Left lung (tissue), 14 donors: ENCODE measurements at regions of chrX and their contacts with region 1.

Region 1: DNA sequence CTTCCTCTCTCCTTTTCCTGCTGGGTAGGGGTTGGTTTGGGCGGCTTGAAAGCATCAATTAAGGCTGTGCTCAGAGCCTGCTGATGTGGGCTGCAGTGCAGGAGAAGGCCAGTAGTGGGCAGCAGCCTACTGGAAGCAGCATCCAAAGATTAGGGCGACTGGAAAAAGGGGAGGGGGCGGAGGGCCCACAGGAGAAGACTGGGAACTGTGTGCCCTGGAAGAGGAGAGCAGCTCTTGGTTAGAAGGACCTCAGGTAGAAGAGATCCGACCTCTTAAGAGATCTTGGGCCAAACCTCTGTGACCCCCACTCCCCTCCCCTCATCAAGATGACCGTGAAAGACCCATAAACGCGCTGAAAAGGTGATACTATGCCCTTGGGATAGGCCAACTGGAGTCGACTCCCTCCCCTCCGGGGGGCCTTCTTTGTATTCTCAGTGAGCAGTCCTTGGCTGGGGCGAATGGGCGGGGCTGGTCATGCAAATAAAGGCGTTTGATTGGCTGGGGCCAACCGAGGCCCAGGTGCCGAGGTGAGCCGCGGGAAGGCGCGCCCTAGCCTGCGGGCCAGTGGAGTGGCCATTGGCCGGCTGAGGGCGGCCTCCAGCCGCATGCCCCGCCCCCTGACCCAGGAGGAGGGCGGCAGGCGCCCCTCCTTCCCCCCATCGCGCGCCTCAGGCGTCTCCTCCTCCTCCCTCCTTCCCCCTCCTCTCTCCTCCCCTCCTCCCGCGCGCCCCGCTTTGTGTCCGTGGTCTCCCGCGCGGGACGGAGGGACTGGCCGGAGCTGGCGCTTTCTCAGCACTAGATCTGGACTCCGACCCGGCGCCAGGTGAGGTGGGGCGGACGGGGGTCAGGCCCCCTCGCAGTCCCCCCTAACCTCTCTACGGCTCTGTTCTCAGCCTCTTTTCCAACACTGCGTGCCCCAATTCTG is 10.1 kb downstream of the DLG3 start:
- DNase-seq: peak; percentile 73 to 87 (median 84)
- ATAC-seq: peak; percentile 92
- H3K4me3 ChIP-seq: peak overlapping the region; percentile 38 to 43
- H3K27ac ChIP-seq: peak overlapping the region; percentile 66 to 76
- H3K4me1 ChIP-seq: peaks cover 0 to 6% of the 10 kb centered on the region in 2 donors
- H3K27me3 ChIP-seq: peaks cover 0 to 29% of the 10 kb centered on the region in 2 donors
- CTCF ChIP-seq: peak; percentile 66 to 70

Region 2: DNA sequence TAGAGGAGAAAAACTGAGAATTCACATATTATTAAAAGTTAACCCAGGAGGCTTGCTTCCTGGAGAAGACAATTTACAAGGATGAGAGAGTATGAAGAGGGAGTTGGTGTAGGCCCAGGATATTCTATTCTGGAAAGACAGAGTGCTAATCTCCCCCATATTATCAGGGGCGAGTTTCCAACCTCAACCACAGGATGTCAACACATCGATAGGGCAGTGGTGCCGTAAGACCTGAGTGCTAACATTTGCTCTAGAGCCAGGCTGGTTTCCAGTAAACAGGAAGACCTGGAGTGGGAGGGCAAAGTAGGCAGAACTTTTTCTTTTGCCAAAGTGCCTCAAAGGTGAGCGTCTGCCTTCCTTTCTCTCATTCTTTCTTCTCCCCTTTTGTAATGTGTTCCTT is 223.0 kb before region 1 on chrX:
- intact Hi-C with region 1: no loop called
- DNase-seq: no peak
- ATAC-seq: no peak
- H3K4me3 ChIP-seq: no peak overlapping the region
- H3K27ac ChIP-seq: no peak overlapping the region
- H3K4me1 ChIP-seq: no peaks in the 10 kb centered on the region
- H3K27me3 ChIP-seq: no peaks in the 10 kb centered on the region
- CTCF ChIP-seq: no peak

Region 3: DNA sequence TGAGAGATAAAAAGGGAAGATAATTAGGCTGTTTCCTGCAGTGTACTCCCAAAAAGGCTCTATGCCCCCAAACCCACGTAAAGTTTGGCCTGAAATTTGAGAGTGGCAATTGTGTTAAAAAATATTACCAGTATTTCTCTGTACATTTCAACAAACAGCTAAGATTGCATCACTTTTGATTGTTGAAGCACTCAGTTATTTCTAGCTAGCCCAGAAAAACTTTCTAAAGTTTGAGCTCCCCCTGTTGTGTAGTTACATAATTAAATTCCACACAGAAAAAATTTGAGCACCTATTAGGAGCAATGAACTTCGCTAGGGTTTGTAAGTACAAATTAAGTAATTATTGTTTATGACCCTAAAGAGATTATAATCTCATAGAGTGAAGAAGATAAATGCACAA is 99.4 kb after region 1 on chrX:
- intact Hi-C with region 1: loop called in 1 of 2 experiments (anchors 10 kb)
- DNase-seq: peak in 2 of 4 donors; percentile 2 to 30
- ATAC-seq: peak; percentile 79
- H3K4me3 ChIP-seq: no peak overlapping the region
- H3K27ac ChIP-seq: peak overlapping the region in 1 of 2 donors; percentile 3
- H3K4me1 ChIP-seq: no peaks in the 10 kb centered on the region
- H3K27me3 ChIP-seq: no peaks in the 10 kb centered on the region
- CTCF ChIP-seq: no peak

Region 4: GRCh38 chrX:70826715-70827114 is 372.0 kb after region 1 on chrX:
- intact Hi-C with region 1: no loop called
- DNase-seq: peak in 1 of 4 donors; percentile 17
- ATAC-seq: no peak
- H3K4me3 ChIP-seq: no peak overlapping the region
- H3K27ac ChIP-seq: no peak overlapping the region
- H3K4me1 ChIP-seq: no peaks in the 10 kb centered on the region
- H3K27me3 ChIP-seq: peaks cover 0 to 6% of the 10 kb centered on the region in 2 donors
- CTCF ChIP-seq: no peak